WTC11 (cell line): ENCODE measurements at regions of chr2 and their contacts with region 1.

Region 1: DNA sequence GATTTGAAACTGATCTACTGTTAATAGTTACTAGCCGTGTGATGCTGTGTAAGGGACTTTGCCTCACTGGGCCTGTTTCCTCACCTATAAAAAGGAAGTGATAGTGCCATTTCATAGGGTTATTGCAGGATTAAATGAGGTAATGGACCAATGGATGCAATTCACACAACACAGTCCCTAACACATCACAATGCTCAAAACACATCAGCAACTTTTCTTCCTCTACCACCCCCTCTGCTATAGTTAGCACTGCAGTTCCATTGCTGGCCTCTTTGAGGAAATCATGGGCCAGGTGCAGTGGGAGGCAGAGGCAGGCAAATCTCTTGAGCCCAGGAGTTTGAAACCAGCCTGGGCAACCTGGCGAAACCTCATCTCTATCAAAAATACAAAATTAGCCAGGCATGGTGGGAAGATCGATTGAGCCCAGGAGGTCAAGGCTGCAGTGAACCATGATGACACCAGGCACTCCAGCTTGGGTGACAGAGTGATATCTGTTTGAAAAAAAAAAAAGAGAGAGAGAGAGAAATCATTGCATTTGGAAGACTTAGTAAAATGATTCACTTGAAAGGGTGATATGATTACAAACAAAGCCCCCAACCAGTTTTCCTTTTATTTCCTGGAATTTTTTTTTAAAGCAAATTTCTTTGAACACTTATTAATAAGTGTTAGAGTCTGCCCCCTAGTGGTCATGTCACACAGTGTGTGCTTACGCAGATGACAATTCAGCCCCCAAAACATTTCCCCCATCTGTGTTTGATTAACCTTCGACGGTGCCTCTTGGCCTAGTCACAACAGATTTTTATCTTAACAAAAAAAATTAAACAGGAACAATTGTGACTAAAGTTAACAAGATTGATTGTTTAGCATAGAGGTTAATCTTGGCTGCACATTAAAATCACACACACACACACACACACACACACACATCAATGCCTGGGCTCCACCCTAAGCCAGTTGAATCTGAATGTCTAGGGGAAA is 88.6 kb upstream of the BCL11A start:
- DNase-seq: peak; percentile 39
- ATAC-seq: peak; percentile 86
- H3K4me3 Mint-ChIP-seq: no peak overlapping the region
- H3K27ac Mint-ChIP-seq: no peak overlapping the region
- H3K4me1 Mint-ChIP-seq: peaks cover 12% of the 10 kb centered on the region; the same call in 1 of the 2 replicates
- H3K27me3 Mint-ChIP-seq: no peaks in the 10 kb centered on the region; the same call in 1 of the 2 replicates
- CTCF ChIP-seq: peak; percentile 69

Region 2: DNA sequence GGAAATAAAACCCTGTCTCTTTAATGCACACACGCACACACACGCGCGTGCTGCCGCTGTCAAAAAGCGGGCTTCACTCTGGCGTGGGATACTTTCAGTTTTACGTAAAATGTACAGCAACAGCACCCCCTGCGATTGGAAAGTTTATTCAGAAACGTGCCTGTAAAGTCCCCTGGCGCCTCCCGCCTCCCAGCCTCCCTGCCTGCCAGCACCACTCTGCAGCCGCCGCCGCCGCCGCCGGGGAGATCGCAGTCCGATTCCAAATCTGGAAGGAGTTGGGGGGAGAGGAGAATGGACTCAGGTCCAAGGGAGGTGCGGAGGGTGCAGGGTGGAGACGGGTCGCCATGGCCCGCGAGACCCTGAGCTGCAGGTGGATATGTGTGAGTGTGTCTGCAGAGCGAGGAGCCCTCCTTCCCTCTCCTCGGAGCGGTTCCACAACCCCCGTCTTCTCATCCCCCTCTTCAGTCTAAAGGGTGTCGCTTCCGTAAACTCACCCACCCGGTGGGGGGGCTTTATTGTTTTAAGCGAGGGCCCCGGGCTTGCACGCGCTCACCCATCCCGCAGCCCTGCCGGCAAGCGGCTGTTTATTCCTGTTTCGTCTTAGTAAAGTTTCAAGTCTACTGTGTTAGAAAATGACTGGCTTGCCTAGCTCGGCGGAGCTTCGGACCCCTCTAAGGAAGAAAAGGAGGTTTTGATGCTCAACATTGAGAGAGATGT is 86.9 kb before region 1 on chr2:
- CTCF ChIA-PET with region 1: no interaction called
- POLR2A ChIA-PET with region 1: no interaction called
- DNase-seq: peak; percentile 57
- ATAC-seq: peak; percentile 0; the same call in 1 of the 2 replicates
- H3K4me3 Mint-ChIP-seq: peak overlapping the region; percentile 89
- H3K27ac Mint-ChIP-seq: peak overlapping the region; percentile 93
- H3K4me1 Mint-ChIP-seq: peaks cover 16% of the 10 kb centered on the region
- H3K27me3 Mint-ChIP-seq: peaks cover 19% of the 10 kb centered on the region
- CTCF ChIP-seq: peak; percentile 20; the same call in 1 of the 2 replicates

Region 3: GRCh38 chr2:60629801-60630385 is 12.2 kb before region 1 on chr2:
- CTCF ChIA-PET with region 1: interaction called, 17 read pairs
- POLR2A ChIA-PET with region 1: no interaction called
- DNase-seq: no peak
- ATAC-seq: no peak
- H3K4me3 Mint-ChIP-seq: no peak overlapping the region
- H3K27ac Mint-ChIP-seq: no peak overlapping the region
- H3K4me1 Mint-ChIP-seq: peaks cover 46% of the 10 kb centered on the region
- H3K27me3 Mint-ChIP-seq: peaks cover 15% of the 10 kb centered on the region
- CTCF ChIP-seq: no peak